ENCODE measurements at regions of chr1 and their contacts with region 1.

Region 1: GRCh38 chr1:10472220-10473144 is at the start of gene DFFA:
- DNase-seq: peak; percentile 68 to 95 (median 87)
- ATAC-seq: peak; percentile 90
- H3K4me3 ChIP-seq: peak within 1 kb of the TSS; percentile 69
- H3K4me3 Mint-ChIP-seq: peak within 1 kb of the TSS; percentile 87 to 96 (median 92)
- H3K27ac ChIP-seq: peak within 1 kb of the TSS; percentile 68
- H3K27ac Mint-ChIP-seq: peak within 1 kb of the TSS; percentile 78 to 93 (median 90)
- H3K4me1 ChIP-seq: peaks cover 21 to 37% of the 10 kb centered on the region in 2 donors
- H3K4me1 Mint-ChIP-seq: peaks cover 12 to 58% (median 49%) of the 10 kb centered on the region in 7 donors
- H3K27me3 ChIP-seq: no peaks in the 10 kb centered on the region
- H3K27me3 Mint-ChIP-seq: no peaks in the 10 kb centered on the region
- total RNA-seq, gene DFFA: 13.5 to 36.0 (median 23.4) TPM

Region 2: DNA sequence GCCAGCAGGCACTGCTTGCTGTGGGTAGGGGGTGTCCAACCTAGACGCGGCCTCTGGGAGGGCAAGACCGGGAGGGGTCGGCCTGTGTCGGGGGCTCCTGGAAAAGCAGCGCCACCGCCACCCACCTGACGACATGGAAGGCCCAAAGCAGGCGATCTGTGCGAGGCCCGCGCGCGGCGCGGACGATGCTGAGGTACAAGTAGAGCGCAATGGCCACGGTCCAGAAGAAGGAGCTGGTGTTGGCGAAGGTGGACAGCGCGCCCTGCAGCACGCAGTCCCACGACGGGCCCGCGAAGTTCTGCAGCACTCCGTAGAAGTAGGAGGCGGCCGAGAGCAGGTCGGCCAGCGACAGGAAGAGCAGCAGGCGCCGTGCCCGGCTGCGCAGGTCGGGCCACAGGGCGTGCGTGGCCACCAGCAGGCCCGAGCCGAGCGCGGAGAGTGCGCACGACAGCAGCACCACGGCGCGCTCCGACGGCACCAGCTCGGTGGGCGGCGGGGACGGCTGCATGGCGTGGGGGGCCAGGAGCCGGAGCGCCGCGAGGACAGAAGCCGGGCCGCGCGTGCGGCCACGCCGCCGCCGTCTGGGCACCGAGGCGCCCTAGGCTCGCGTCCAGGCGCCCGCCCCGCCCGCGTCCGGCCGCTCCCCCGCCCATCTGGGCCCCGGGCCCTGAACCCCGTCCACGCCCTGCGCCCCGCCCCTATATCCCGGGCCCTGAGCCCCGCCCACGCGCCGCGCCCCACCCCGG is 1343.8 kb before region 1 on chr1 and contains the start of gene GPR157:
- CTCF ChIA-PET with region 1: no interaction called
- POLR2A ChIA-PET with region 1: no interaction called
- intact Hi-C with region 1: loop called in 1 of 2 experiments (anchors 2 kb)
- DNase-seq: peak; percentile 53 to 82 (median 70)
- ATAC-seq: peak; percentile 95
- H3K4me3 ChIP-seq: peak within 1 kb of the TSS; percentile 67
- H3K4me3 Mint-ChIP-seq: peak within 1 kb of the TSS; percentile 85 to 95 (median 90)
- H3K27ac ChIP-seq: peak within 1 kb of the TSS; percentile 67
- H3K27ac Mint-ChIP-seq: peak within 1 kb of the TSS; percentile 59 to 94 (median 87)
- H3K4me1 ChIP-seq: peaks cover 8 to 24% of the 10 kb centered on the region in 2 donors
- H3K4me1 Mint-ChIP-seq: peaks cover 19 to 40% (median 32%) of the 10 kb centered on the region in 7 donors
- H3K27me3 ChIP-seq: no peaks in the 10 kb centered on the region
- H3K27me3 Mint-ChIP-seq: peaks cover 0 to 25% (median 0%) of the 10 kb centered on the region in 5 donors
- total RNA-seq, gene GPR157: 4.0 to 14.1 (median 5.9) TPM

Region 3: GRCh38 chr1:9473032-9473792 is 999.3 kb before region 1 on chr1:
- CTCF ChIA-PET with region 1: no interaction called
- POLR2A ChIA-PET with region 1: no interaction called
- intact Hi-C with region 1: no loop called
- DNase-seq: no peak
- ATAC-seq: no peak
- H3K4me3 ChIP-seq: no peak overlapping the region
- H3K4me3 Mint-ChIP-seq: no peak overlapping the region
- H3K27ac ChIP-seq: no peak overlapping the region
- H3K27ac Mint-ChIP-seq: no peak overlapping the region
- H3K4me1 ChIP-seq: no peaks in the 10 kb centered on the region
- H3K4me1 Mint-ChIP-seq: no peaks in the 10 kb centered on the region
- H3K27me3 ChIP-seq: no peaks in the 10 kb centered on the region
- H3K27me3 Mint-ChIP-seq: peaks cover 3 to 22% (median 10%) of the 10 kb centered on the region in 5 donors

Region 4: GRCh38 chr1:9717193-9718005 is 755.1 kb before region 1 on chr1:
- CTCF ChIA-PET with region 1: interaction called, 11 read pairs
- POLR2A ChIA-PET with region 1: interaction called, 3 read pairs
- intact Hi-C with region 1: no loop called
- DNase-seq: peak; percentile 63 to 95 (median 94)
- ATAC-seq: peak; percentile 90
- H3K4me3 ChIP-seq: peak overlapping the region; percentile 76
- H3K4me3 Mint-ChIP-seq: peak overlapping the region; percentile 80 to 98 (median 94)
- H3K27ac ChIP-seq: peak overlapping the region; percentile 63
- H3K27ac Mint-ChIP-seq: peak overlapping the region; percentile 90 to 99 (median 95)
- H3K4me1 ChIP-seq: peaks cover 60 to 87% of the 10 kb centered on the region in 2 donors
- H3K4me1 Mint-ChIP-seq: peaks cover 26 to 82% (median 66%) of the 10 kb centered on the region in 7 donors
- H3K27me3 ChIP-seq: no peaks in the 10 kb centered on the region
- H3K27me3 Mint-ChIP-seq: no peaks in the 10 kb centered on the region

Region 5: DNA sequence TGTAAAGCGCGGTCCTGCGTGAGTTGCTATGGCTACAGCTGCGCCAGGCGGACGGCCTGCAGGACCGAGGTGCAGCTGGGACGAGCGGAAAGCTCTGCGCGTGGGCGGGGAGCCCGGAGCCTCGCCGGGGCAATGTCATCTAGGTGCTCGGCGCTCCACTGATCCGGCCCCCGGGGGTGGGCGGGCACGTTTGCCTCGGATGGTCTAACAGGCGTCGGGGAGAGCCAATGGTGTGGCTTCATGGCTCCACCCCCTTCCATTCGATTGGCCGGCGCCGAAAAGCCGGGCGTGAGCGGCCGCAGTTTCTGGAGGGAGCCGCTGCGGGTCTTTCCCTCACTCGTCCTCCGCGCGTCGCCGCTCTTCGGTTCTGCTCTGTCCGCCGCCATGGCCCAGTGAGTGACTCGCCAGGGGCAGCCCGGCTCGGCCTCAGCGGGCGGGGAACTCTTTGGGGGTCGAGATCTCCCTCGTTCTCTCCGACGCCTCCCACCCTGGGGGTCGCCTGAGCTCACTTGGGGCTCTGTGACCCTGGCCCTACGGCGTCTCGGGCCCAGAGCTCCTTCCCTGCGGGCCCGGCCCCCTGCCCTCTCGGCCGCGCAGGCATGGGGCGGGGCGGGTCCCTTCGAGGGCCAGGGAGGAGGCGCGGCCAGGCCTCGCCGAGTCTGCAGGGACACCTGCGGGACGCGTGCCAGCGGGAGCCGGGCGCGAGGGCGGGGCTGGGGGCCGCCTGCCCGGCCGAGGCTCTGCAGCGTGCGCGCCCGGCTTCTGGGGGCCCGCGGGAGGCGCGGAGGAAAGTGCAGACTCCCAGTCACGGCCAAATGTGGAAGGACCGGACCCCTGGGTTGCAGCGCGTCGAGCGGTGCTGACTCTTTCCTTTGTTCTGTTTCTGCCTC is 73.5 kb before region 1 on chr1 and contains the start of gene PGD:
- CTCF ChIA-PET with region 1: no interaction called
- POLR2A ChIA-PET with region 1: interaction called, 5 read pairs
- intact Hi-C with region 1: loop called (anchors 1 kb)
- DNase-seq: peak; percentile 87 to 98 (median 94)
- ATAC-seq: peak; percentile 99
- H3K4me3 ChIP-seq: peak within 1 kb of the TSS; percentile 95
- H3K4me3 Mint-ChIP-seq: peak within 1 kb of the TSS; percentile 87 to 97 (median 96)
- H3K27ac ChIP-seq: peak within 1 kb of the TSS; percentile 86
- H3K27ac Mint-ChIP-seq: peak within 1 kb of the TSS; percentile 63 to 94 (median 82)
- H3K4me1 ChIP-seq: peaks cover 4 to 7% of the 10 kb centered on the region in 2 donors
- H3K4me1 Mint-ChIP-seq: peaks cover 10 to 30% (median 25%) of the 10 kb centered on the region in 7 donors
- H3K27me3 ChIP-seq: no peaks in the 10 kb centered on the region
- H3K27me3 Mint-ChIP-seq: no peaks in the 10 kb centered on the region
- total RNA-seq, gene PGD: 42.0 to 110 (median 48.5) TPM

Region 6: GRCh38 chr1:11012250-11013171 is 540.0 kb after region 1 on chr1 and contains the start of gene TARDBP:
- CTCF ChIA-PET with region 1: no interaction called
- POLR2A ChIA-PET with region 1: interaction called, 3 read pairs
- intact Hi-C with region 1: loop called (anchors 1 kb)
- DNase-seq: peak; percentile 88 to 95 (median 93)
- ATAC-seq: peak; percentile 95
- H3K4me3 ChIP-seq: peak within 1 kb of the TSS; percentile 74
- H3K4me3 Mint-ChIP-seq: peak within 1 kb of the TSS; percentile 86 to 96 (median 93)
- H3K27ac ChIP-seq: peak within 1 kb of the TSS; percentile 94
- H3K27ac Mint-ChIP-seq: peak within 1 kb of the TSS; percentile 95 to 98 (median 98)
- H3K4me1 ChIP-seq: peaks cover 19 to 24% of the 10 kb centered on the region in 2 donors
- H3K4me1 Mint-ChIP-seq: peaks cover 15 to 36% (median 26%) of the 10 kb centered on the region in 7 donors
- H3K27me3 ChIP-seq: no peaks in the 10 kb centered on the region
- H3K27me3 Mint-ChIP-seq: no peaks in the 10 kb centered on the region
- total RNA-seq, gene TARDBP: 114 to 196 (median 174) TPM

Region 7: DNA sequence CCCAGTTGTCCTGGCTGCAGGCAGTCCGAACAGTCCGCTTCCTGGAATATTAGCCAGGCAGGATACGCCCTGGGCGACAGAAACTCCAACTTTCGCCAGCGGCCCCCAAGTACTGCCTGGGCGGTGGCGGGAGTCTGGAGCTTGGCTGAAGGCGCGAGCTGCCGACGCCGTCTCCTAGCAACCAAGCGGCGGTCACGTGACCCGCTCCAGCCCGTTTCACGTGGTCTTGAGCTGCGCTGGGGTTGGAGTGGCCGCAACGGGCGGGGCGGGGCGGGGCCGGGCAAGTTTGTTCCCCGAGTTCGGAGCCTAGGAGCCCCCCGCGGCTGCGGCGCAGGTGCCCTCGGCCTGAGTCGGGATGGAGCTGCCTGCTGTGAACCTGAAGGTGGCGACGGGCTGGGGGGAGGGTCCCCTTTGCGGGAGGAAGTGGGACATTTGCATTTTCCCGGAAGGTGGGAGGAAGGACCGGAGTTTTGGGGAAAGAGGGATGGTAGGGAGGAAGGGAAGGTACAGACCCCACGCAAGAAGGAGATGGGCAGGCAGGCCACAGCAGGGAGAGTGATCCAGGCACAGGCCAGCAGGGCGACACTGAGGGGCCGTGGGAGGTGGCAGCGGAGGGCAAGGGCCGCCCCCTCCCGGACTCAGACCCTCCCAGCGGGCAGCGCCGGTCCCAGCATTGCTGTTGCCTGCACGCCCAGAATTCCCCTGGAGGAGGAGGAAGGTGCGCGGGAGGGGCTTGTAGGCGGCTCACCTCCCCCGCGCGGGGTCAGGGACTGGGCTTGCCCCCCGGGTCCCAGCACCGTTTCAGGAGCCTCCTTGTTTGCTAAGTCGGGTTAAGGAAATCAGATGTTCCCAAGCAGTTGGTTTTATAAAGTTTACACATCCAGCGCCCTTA is 1263.6 kb after region 1 on chr1 and contains the start of gene AGTRAP:
- CTCF ChIA-PET with region 1: no interaction called
- POLR2A ChIA-PET with region 1: no interaction called
- intact Hi-C with region 1: loop called in 1 of 2 experiments (anchors 10 kb)
- DNase-seq: peak; percentile 62 to 84 (median 71)
- ATAC-seq: peak; percentile 78
- H3K4me3 ChIP-seq: peak within 1 kb of the TSS; percentile 92
- H3K4me3 Mint-ChIP-seq: peak within 1 kb of the TSS; percentile 84 to 96 (median 92)
- H3K27ac ChIP-seq: peak within 1 kb of the TSS; percentile 79
- H3K27ac Mint-ChIP-seq: peak within 1 kb of the TSS; percentile 3 to 95 (median 83)
- H3K4me1 ChIP-seq: peaks cover 38 to 52% of the 10 kb centered on the region in 2 donors
- H3K4me1 Mint-ChIP-seq: peaks cover 51 to 80% (median 76%) of the 10 kb centered on the region in 7 donors
- H3K27me3 ChIP-seq: no peaks in the 10 kb centered on the region
- H3K27me3 Mint-ChIP-seq: no peaks in the 10 kb centered on the region
- total RNA-seq, gene AGTRAP: 28.2 to 82.5 (median 32.7) TPM